Activated naive CD4-positive, alpha-beta T cell treated with anti-CD3 and anti-CD28 coated beads, Interleukin-2, amount 10 ng/mL, durations not matched to agents 7 days and 5 days (primary cell): ENCODE measurements at regions of chr11 and their contacts with region 1.

Region 1: DNA sequence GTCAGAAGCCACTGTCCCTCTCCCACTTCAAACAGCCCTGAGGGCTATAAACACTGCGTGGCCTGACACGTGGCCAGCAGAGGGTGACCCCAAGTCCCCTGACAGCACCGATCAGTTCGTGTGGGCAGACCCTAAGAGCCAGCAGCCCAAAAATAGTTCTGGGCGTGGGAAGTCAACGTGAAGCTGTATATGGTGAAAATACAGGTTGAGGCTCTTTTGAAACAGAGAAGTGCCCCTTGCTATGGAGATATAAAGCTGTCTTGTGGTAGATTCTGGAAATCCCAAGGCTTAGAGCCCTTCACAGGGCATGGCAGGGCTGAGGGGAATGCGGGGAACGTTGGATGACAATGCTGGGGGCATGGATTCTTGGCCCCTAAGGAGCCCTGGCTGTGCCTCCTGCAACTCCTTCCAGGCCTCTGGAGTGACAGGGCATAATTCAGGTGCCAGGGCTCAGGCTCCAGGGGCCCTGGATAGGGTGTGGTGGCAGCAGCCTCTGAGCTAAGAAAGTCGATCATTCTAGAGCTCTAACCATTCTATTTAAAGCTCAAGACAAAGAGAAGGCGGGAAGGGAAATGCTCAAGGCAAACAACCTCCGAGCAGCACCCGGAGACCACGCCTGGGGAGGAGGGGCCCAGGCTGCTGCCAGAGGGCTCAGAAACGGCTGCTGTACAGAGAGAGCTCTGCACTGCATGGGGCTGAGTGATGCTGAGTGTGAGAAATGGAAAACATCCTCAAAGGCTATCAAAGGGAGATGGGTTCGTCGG is 60.4 kb upstream of the CD5 start:
- DNase-seq: peak; percentile 96
- H3K4me3 Mint-ChIP-seq: peak overlapping the region; percentile 60
- H3K27ac Mint-ChIP-seq: peak overlapping the region; percentile 100
- H3K4me1 Mint-ChIP-seq: peaks cover 74% of the 10 kb centered on the region
- H3K27me3 Mint-ChIP-seq: no peaks in the 10 kb centered on the region

Region 2: DNA sequence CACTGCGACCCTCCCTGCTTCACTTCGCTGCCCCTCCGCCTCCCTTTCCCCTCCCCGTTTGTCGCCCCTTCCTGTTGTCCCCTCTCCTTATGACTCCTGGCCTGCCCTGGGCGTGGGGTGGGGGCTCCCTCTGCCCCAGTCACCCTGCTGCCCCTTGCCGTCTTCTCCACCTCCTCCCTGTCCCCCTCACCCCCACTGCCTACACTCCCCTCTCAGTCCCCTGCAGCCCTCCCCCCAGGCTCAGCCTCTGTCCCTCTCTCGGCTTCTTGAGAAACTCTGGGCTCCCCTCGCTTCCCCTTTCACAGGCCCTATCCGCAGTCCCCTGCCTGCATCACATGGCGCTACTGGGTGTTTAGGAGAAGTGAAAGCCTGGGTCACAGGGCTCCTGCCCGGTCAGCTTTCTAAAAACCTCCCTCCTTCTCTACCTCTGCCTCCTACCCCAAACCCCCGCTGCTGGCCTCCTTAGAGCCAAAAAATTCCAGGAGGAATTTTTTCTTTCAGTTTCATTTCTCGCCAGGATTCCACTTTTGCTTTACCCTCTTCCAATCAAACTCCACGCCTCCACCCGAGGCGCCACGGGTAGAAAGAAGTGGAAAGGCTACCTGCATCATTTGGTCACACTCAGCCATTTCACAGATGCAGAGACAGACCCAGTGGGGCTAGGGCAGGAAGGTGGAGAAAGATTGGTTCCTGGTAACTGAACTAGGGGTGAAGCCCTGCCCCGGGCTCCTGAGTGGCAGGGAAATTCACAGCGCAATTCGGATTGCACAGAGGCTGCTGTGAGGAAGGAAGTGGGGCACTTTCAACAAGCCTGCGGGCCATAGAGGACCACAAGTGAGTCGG is 89.8 kb before region 1 on chr11 and contains the start of gene SLC15A3:
- CTCF ChIA-PET with region 1: no interaction called
- DNase-seq: peak; percentile 62
- H3K4me3 Mint-ChIP-seq: peak within 1 kb of the TSS; percentile 80
- H3K27ac Mint-ChIP-seq: peak within 1 kb of the TSS; percentile 80
- H3K4me1 Mint-ChIP-seq: peaks cover 26% of the 10 kb centered on the region
- H3K27me3 Mint-ChIP-seq: peaks cover 60% of the 10 kb centered on the region

Region 3: GRCh38 chr11:61028272-61028761 is 13.6 kb before region 1 on chr11:
- CTCF ChIA-PET with region 1: interaction called, 25 read pairs
- DNase-seq: peak; percentile 73
- H3K4me3 Mint-ChIP-seq: peak overlapping the region; percentile 82
- H3K27ac Mint-ChIP-seq: peak overlapping the region; percentile 98
- H3K4me1 Mint-ChIP-seq: peaks cover 89% of the 10 kb centered on the region
- H3K27me3 Mint-ChIP-seq: no peaks in the 10 kb centered on the region